ENCODE measurements at regions of chr13 and their contacts with region 1.

Region 1: GRCh38 chr13:44498969-44499368 is 77.2 kb downstream of the TSC22D1 start:
- DNase-seq: no peak
- H3K4me3 Mint-ChIP-seq: no peak overlapping the region
- H3K27ac Mint-ChIP-seq: no peak overlapping the region
- H3K4me1 Mint-ChIP-seq: no peaks in the 10 kb centered on the region
- H3K27me3 Mint-ChIP-seq: no peaks in the 10 kb centered on the region

Region 2: DNA sequence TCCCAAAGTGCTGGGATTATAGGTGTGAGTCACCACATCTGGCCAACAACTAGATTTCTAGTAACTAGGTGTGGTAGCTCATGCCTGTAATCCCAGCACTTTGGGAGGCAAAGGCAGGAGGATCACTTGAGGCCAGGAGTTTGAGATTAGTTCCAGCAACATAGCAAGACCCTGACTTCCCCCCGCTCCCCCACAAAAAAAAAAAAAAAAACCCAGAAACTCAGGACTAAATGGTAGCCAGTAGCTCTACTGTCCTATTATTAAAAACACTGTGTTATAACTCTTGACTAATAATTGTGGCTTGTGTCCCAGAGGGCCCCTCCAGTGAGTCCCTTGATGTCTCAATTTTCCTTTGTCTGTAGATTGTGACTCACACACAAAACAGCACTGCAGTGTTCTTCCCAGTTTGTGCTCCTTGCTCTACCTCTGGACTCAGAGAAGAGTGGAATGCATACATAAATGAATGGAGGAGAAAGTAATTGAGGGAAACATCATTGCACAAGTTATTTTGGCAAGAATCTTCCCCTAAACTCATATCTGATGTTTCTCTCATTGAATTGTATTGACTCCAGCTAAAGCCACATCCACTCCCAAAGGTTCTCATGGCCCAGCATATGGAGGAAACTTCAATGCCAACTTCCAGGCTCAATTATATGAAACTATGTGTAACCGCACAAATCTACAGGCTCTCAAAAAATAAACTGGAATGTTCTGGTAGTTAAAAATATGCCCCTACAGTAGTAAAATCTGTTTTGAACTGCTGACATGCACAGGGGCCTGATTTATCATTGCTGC is 833.3 kb after region 1 on chr13:
- CTCF ChIA-PET with region 1: no interaction called
- POLR2A ChIA-PET with region 1: interaction called, 13 read pairs
- DNase-seq: no peak
- H3K4me3 Mint-ChIP-seq: no peak overlapping the region
- H3K27ac Mint-ChIP-seq: peak overlapping the region; percentile 3
- H3K4me1 Mint-ChIP-seq: peaks cover 88% of the 10 kb centered on the region
- H3K27me3 Mint-ChIP-seq: no peaks in the 10 kb centered on the region

Measured in activated CD4-positive, alpha-beta T cell treated with anti-CD3 and anti-CD28 coated beads, Interleukin-2, amount 10 ng/mL, durations not matched to agents 7 days and 5 days (primary cell).